ENCODE measurements at regions of chr5 and their contacts with region 1.

Region 1: DNA sequence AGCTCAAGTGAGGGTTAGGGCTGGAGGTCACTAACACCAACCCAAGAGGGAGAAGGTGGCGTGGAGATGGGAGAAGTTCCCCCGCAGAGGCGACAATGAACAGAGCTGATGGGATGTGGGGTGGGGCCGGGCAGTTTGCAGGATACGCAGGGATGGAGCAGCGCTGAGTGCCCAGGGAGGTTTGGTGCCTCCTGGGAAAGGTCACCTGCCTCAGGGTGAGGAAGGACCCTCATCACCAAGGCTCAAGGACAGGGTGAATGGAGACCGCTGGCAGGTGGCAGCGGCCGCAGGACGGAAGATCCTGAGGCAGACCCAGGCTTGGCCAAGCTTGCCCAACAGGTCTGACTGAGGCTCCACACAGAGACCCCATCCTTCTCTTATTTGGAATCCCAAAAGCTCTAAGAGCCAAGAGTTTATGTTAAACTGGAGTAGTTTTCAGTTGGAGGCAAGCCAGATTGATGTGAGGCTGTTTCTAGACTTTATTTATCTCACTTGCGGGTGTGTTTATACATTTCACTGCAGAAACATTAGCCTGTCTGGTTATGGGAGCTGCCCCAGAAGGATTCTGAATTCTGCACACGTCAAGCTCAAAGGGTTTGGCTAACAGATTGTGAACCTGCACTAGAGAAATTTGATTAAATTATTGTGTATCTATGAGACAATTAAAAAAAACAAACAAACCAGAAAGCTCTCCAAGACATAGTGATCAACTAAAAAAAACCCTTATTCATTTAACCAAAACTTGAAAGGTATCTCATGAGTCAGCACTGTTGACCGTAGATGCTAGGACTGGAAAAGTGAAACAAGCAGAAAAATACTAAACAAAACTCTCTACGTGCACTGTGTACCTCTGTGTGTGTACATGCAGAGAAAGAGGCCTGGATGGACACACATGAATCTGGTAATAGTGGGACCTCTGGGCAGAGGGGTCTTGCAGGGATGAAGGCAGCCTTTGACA is 146.2 kb upstream of the PHYKPL start:
- DNase-seq: no peak
- H3K4me3 ChIP-seq: no peak overlapping the region
- H3K27ac ChIP-seq: no peak overlapping the region
- H3K4me1 ChIP-seq: no peaks in the 10 kb centered on the region
- H3K27me3 ChIP-seq: no peaks in the 10 kb centered on the region
- CTCF ChIP-seq: no peak
- POLR2A ChIP-seq: no peak

Region 2: DNA sequence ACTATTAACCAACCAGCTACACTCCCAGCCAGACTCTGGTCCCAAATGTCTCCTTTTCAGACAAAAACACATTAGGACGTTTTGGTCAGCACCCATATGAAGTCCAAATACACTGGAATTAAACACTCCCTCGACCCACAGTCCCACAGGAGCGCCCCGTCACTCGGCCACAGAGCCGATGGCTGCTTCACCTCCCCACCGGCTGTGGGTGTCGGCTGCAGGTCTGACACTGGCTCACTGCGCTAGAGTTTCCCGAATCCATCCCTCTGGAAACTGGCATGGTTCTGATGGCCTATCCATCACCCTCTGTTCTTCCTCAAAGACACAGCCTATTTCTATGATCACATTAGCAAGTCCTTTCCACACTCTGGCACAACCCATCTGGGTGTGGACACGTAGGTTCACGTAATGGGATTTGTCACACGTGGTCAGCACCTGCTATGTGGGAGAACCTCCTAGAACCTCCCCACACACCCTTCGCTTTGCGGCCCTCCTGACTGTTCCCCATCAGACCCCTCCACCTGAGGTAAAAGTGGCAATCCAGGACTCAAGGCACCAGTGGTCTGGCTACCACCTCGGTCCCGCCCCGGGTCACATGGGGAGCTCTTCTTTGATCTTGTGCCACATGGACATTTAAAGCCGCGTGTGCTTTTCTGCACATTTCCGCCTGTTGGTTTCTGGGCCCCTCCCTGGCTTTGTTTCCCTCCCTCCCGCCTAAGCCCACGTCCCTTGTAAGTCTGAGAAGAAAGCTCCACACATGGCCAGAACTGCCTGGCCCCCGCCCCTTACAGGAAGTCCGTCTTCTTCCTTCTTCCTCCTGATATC is 15.1 kb before region 1 on chr5:
- intact Hi-C with region 1: loop called (anchors 1 kb)
- DNase-seq: no peak
- H3K4me3 ChIP-seq: no peak overlapping the region
- H3K27ac ChIP-seq: no peak overlapping the region
- H3K4me1 ChIP-seq: no peaks in the 10 kb centered on the region
- H3K27me3 ChIP-seq: peaks cover 0 to 8% of the 10 kb centered on the region in 2 donors
- CTCF ChIP-seq: no peak
- POLR2A ChIP-seq: no peak